Aorta (tissue), 5 donors: ENCODE measurements at regions of chr14 and their contacts with region 1.

Region 1: GRCh38 chr14:99628832-99629618 is 15.9 kb upstream of the HHIPL1 start:
- DNase-seq: peak; percentile 81 to 90
- ATAC-seq: peak; percentile 89
- H3K4me3 ChIP-seq: no peak overlapping the region
- H3K27ac ChIP-seq: no peak overlapping the region
- H3K4me1 ChIP-seq: no peaks in the 10 kb centered on the region
- H3K27me3 ChIP-seq: no peaks in the 10 kb centered on the region

Region 2: DNA sequence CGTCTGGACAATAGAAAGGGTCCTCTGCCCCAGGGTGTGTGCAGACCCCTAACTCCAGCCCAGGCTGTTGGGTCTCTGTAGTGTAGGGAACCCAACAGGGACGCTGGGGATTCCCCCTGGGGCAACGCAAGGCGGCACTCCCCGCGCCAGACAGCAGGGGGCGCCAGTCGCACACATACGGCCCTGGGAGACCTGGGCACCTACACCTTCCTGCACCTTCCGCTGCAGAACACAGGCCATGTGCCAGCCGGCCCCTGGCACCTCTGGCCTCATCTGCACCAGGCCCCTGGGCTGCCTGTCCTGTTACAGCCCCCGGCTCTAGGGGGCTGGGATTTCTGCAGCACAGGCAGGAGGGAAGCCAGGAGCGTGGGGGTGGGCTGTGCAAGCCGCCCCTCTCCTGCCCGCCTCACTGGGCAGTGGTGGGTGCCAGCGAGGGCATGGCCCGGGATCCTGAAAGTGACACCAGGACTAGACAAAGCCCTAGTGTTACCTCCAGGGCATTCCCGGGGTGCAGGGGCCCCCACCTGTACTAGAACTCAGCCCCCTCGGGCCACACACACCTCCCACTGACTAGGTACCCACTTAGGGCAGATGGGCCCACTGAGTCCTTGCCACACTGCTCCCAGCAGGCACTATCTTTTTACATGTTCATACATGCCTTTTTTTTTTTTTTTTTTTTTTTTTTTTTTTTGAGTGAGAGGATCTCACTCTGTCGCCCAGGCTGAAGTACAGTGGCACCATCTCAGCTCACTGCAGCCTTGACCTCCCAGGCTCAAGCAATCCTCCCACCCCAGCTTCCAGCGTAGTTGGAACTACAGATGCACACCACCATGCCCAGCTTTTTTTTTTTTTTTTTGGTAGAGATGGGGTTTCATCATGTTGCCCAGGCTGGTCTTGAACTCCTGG is 110.3 kb before region 1 on chr14:
- intact Hi-C with region 1: loop called (anchors 1 to 2 kb)
- DNase-seq: peak; percentile 77 to 91
- ATAC-seq: peak; percentile 71
- H3K4me3 ChIP-seq: no peak overlapping the region
- H3K27ac ChIP-seq: no peak overlapping the region
- H3K4me1 ChIP-seq: no peaks in the 10 kb centered on the region
- H3K27me3 ChIP-seq: no peaks in the 10 kb centered on the region

Region 3: DNA sequence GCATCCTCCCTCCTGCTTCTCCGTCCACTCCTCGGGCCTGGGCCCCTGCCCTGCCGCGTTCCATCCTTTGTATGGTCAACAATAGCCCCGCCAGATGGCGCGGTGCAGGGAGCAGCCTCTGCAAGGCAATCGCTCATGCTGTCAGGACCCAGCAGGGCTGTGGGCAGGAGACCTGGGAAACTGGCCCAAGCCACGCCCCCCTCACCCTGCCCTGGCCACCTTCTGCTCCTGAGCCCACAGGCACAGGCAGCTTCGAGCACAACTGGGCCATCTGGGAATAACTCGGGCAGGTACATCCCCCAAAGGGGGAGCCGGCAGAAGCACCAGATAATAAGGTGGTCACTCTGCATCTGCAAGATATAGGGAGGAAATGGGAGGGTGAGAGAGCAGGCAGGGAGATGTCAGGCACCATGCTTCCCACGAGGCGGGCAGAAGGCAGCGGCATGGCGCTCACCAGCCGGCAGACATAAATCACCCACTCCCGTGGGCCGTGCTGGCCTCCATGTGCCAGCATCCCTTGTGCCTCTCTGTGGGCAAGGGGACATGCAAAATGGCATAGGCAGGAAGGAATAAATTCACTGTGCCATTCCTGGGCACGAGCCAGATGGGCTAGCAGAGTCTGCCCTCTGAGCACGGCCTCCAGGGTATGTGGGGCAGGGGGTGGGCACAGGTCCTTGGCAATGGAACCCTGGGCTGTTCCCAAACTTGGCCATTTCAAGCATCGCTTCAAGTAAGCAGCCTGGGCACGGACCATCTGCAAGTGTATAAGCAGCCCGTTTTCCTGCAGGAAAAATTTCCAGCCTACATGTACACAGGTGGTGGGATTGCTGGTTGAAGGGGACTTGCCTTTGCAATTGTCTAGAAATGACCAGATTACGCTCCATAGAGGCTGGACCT is 65.5 kb before region 1 on chr14:
- intact Hi-C with region 1: loop called (anchors 5 kb)
- DNase-seq: peak; percentile 84 to 89
- ATAC-seq: peak; percentile 75
- H3K4me3 ChIP-seq: no peak overlapping the region
- H3K27ac ChIP-seq: no peak overlapping the region
- H3K4me1 ChIP-seq: no peaks in the 10 kb centered on the region
- H3K27me3 ChIP-seq: no peaks in the 10 kb centered on the region

Region 4: GRCh38 chr14:99574099-99574880 is 54.7 kb before region 1 on chr14:
- intact Hi-C with region 1: no loop called
- DNase-seq: peak in 1 of 2 donors; percentile 56
- ATAC-seq: peak; percentile 1
- H3K4me3 ChIP-seq: no peak overlapping the region
- H3K27ac ChIP-seq: no peak overlapping the region
- H3K4me1 ChIP-seq: no peaks in the 10 kb centered on the region
- H3K27me3 ChIP-seq: no peaks in the 10 kb centered on the region

Region 5: GRCh38 chr14:99609245-99610117 is 19.5 kb before region 1 on chr14:
- intact Hi-C with region 1: no loop called
- DNase-seq: no peak
- ATAC-seq: no peak
- H3K4me3 ChIP-seq: no peak overlapping the region
- H3K27ac ChIP-seq: no peak overlapping the region
- H3K4me1 ChIP-seq: no peaks in the 10 kb centered on the region
- H3K27me3 ChIP-seq: no peaks in the 10 kb centered on the region